GM12878 (cell line): ENCODE measurements at regions of chr12 and their contacts with region 1.

Region 1: GRCh38 chr12:130576371-130576816 is 139.7 kb downstream of the RIMBP2 start:
- DNase-seq: no peak
- ATAC-seq: no peak
- H3K4me3 ChIP-seq: no peak overlapping the region
- H3K27ac ChIP-seq: peak overlapping the region; percentile 31; the same call in 1 of the 2 replicates
- H3K4me1 ChIP-seq: peaks cover 4% of the 10 kb centered on the region; the same call in 1 of the 2 replicates
- H3K27me3 ChIP-seq: no peaks in the 10 kb centered on the region
- CTCF ChIP-seq: no peak
- EP300 ChIP-seq: no peak
- POLR2A ChIP-seq: no peak
- RAD21 ChIP-seq: no peak

Region 2: GRCh38 chr12:130335517-130336392 is 240.6 kb before region 1 on chr12:
- CTCF ChIA-PET with region 1: no interaction called
- POLR2A ChIA-PET with region 1: no interaction called
- RAD21 ChIA-PET with region 1: no interaction called
- SMC1A ChIA-PET with region 1: no interaction called
- in situ Hi-C with region 1: no loop called
- intact Hi-C with region 1: no loop called
- DNase-seq: peak; percentile 3
- ATAC-seq: peak; percentile 56; the same call in 1 of the 3 replicates
- H3K4me3 ChIP-seq: no peak overlapping the region
- H3K27ac ChIP-seq: no peak overlapping the region
- H3K4me1 ChIP-seq: no peaks in the 10 kb centered on the region
- H3K27me3 ChIP-seq: no peaks in the 10 kb centered on the region
- CTCF ChIP-seq: peak; percentile 37 to 71 (median 58); a peak in 5 of 6 replicates
- EP300 ChIP-seq: no peak
- POLR2A ChIP-seq: no peak
- RAD21 ChIP-seq: peak; percentile 73

Region 3: GRCh38 chr12:130589540-130590317 is 13.3 kb after region 1 on chr12:
- CTCF ChIA-PET with region 1: no interaction called
- POLR2A ChIA-PET with region 1: no interaction called
- RAD21 ChIA-PET with region 1: interaction called, 6 read pairs
- SMC1A ChIA-PET with region 1: interaction called, 10 read pairs
- in situ Hi-C with region 1: no loop called
- intact Hi-C with region 1: no loop called
- DNase-seq: no peak
- ATAC-seq: no peak; the same call in 2 of the 3 replicates
- H3K4me3 ChIP-seq: no peak overlapping the region
- H3K27ac ChIP-seq: peak overlapping the region; percentile 55
- H3K4me1 ChIP-seq: no peaks in the 10 kb centered on the region
- H3K27me3 ChIP-seq: no peaks in the 10 kb centered on the region
- CTCF ChIP-seq: no peak
- EP300 ChIP-seq: no peak
- POLR2A ChIP-seq: no peak
- RAD21 ChIP-seq: no peak

Region 4: GRCh38 chr12:130715998-130716968 is 139.9 kb after region 1 on chr12 and contains the start of gene RIMBP2:
- CTCF ChIA-PET with region 1: no interaction called
- POLR2A ChIA-PET with region 1: no interaction called
- RAD21 ChIA-PET with region 1: interaction called, 5 read pairs
- SMC1A ChIA-PET with region 1: interaction called, 6 read pairs
- in situ Hi-C with region 1: no loop called
- intact Hi-C with region 1: loop called (anchors 10 kb)
- DNase-seq: no peak
- ATAC-seq: peak; percentile 44
- H3K4me3 ChIP-seq: peak within 1 kb of the TSS; percentile 58
- H3K27ac ChIP-seq: peak within 1 kb of the TSS; percentile 61
- H3K4me1 ChIP-seq: no peaks in the 10 kb centered on the region
- H3K27me3 ChIP-seq: no peaks in the 10 kb centered on the region; a peak in 1 of 4 replicates
- CTCF ChIP-seq: no peak
- EP300 ChIP-seq: no peak
- POLR2A ChIP-seq: no peak
- RAD21 ChIP-seq: no peak
- polyA plus RNA-seq, gene RIMBP2: 0.04 TPM in 1 of 2 experiments, not detected in the other